ENCODE measurements at regions of chr12 and their contacts with region 1.

Region 1: DNA sequence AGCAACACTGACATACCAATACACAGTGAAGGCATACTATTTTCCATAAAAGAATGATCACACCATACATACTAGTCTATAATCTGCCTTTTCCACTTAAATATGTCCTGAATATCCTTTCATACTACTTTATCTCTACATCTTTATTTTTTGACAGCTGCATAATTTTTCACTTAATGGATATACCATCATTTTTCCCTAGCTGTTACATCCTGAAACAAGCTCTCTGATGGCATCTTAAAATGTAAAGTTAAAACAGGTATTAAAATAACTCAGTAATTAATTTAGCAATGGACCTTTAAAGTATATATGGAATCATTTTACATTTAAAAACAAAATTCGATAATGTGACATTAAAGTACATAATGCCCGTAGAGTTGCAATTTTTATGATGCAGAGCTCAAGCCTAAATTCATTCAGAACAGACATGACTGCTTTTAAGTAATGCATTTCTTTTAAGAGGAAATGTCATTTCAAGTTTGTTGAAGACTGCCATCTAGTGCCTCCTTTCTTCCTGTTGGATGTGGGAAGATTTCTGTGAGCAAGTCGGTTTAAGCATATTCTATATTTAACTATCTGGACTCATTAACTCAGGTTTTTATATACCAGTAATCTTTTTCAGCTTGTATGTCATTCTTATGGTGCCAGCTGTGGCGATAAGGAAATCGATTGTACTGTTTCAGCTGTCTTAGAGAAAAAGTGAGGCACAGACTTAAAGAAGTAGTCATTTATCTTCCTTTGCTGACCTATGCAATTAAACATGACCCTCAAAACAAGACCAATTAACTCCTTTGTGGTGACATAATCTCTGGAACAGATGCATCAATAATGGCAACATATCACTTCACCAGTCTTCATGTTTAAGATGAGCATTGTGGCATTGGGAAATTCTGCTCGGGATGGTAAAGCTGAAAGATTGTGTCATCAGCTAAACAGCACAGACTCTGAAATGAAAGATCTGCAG is 20.3 kb downstream of the PRICKLE1 start:
- DNase-seq: peak; percentile 33
- H3K4me3 ChIP-seq: no peak overlapping the region
- CTCF ChIP-seq: peak; percentile 38

Region 2: GRCh38 chr12:42482445-42483237 is 86.6 kb before region 1 on chr12:
- CTCF ChIA-PET with region 1: interaction called, 72 read pairs
- POLR2A ChIA-PET with region 1: no interaction called
- DNase-seq: no peak
- H3K4me3 ChIP-seq: peak overlapping the region; percentile 73
- CTCF ChIP-seq: peak; percentile 94

Region 3: DNA sequence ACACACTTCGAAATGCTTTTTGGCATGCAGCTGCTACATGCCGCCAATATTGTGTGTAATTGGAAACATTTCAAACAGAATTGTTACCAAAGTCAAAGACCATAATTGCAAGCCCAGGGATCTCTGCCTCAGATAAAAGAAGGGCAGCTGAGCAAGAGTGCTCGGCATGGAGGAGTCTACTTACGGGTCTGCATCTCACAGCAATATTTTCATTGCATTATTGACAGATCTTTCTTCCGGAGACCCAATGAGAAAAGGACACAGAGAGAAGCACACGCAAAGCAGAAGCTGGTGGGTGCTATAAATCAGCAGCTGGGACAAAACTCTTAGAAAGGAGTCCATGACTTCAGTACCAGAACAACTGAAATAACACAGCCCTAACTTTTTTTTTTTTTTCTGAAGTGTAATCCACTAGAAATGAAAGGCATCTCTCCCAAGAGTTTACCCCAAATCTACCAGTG is 15.4 kb after region 1 on chr12:
- CTCF ChIA-PET with region 1: interaction called, 38 read pairs
- POLR2A ChIA-PET with region 1: no interaction called
- DNase-seq: no peak
- H3K4me3 ChIP-seq: no peak overlapping the region
- CTCF ChIP-seq: no peak

Region 4: DNA sequence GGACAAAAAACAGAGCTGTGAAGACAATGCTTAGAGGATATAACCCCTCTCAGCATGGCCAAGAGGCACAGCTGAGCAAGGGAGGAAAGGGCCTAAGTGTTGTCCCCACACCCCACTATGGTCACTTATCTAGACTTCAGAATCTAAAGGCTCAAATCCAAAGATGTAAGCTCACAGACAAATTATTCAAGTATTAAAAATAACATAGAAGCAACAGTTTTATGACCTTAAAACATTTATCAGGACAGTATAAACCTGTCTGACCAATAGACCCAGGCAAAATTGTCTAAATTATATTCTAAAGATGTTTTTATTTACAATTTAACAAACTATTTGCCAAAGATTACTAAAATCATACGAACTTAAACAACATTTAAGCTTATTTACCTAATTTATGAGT is 48.4 kb after region 1 on chr12:
- CTCF ChIA-PET with region 1: no interaction called
- POLR2A ChIA-PET with region 1: no interaction called
- DNase-seq: no peak
- H3K4me3 ChIP-seq: no peak overlapping the region
- CTCF ChIP-seq: no peak

Region 5: DNA sequence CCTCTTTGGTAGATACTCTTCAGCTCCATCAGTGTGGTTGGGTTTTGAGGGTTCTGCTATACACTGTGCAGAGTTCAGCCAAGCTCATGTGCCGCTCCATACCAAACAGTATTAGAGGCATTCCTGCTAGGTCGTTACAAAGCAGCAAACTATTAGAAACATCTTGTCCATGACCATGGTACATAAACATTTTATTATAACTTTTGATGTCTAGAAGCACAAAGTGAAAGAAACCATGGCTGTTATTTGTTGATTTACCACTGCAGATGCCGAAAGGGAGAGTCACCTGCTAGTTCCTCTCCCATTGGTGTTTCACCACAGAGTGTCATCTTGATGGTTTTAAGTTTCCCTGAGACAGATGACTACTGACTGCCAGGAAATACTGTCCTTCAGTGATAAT is 740.7 kb after region 1 on chr12:
- CTCF ChIA-PET with region 1: no interaction called
- POLR2A ChIA-PET with region 1: no interaction called
- DNase-seq: peak; percentile 97
- H3K4me3 ChIP-seq: no peak overlapping the region
- CTCF ChIP-seq: no peak